CD8-positive, alpha-beta T cell (primary cell): ENCODE measurements at regions of chr14 and their contacts with region 1.

Region 1: GRCh38 chr14:51651388-51652167 is at the start of gene FRMD6:
- DNase-seq: peak; percentile 58 to 90 (median 76)
- ATAC-seq: peak; percentile 82
- H3K4me3 ChIP-seq: peak within 1 kb of the TSS; percentile 87 to 94
- H3K4me3 Mint-ChIP-seq: peak within 1 kb of the TSS; percentile 85
- H3K27ac ChIP-seq: peak within 1 kb of the TSS; percentile 55 to 73
- H3K27ac Mint-ChIP-seq: peak within 1 kb of the TSS; percentile 73
- H3K4me1 ChIP-seq: peaks cover 19% of the 10 kb centered on the region
- H3K4me1 Mint-ChIP-seq: peaks cover 17% of the 10 kb centered on the region
- H3K27me3 ChIP-seq: peaks cover 6 to 16% of the 10 kb centered on the region in 2 experiments
- H3K27me3 Mint-ChIP-seq: peaks cover 21% of the 10 kb centered on the region
- CTCF ChIP-seq: peak; percentile 70
- total RNA-seq, gene FRMD6: 2.4 to 3.5 TPM

Region 2: DNA sequence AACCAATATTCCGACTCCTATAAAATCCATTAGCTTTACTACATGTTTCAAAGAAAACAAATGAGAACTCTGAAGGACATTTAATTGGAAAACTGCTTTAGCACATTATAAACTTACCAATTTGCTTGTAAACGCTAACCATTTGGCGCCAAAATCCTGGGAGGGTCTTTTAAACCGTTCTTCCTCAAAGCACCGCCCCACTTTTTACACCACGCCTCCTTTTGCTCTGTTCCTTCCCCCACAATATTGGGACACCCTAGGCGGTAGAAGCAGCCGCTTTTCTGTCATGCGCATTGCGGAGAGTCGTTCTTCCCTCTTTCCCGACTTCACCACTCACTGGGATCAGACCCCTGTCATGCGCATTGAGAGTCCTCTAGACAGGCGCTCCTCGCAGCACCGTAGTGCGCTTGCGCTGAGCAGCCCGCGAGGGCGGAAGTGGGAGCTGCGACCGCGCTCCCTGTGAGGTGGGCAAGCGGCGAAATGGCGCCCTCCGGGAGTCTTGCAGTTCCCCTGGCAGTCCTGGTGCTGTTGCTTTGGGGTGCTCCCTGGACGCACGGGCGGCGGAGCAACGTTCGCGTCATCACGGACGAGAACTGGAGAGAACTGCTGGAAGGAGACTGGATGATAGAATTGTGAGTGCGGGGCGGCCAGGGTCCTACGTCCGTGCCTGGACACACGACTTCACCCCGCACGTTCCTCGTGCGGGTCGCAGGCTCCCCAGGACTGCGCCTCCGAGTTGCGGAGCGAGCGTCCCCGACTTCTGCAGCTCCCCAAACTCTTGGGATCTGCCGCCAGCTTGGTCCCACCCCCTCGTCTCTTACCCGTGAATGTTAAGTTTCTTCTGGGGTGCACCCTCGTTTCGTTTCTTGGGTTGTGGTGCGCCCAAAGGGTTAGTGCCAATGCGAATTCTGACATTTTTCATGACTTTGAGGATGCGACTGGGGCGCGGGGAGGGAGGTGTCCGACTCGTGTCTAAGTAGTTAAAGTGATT is 411.5 kb before region 1 on chr14 and contains the start of gene TMX1:
- CTCF ChIA-PET with region 1: no interaction called
- POLR2A ChIA-PET with region 1: no interaction called
- intact Hi-C with region 1: loop called (anchors 2 to 5 kb)
- DNase-seq: peak; percentile 58 to 94 (median 85)
- ATAC-seq: peak; percentile 93
- H3K4me3 ChIP-seq: peak within 1 kb of the TSS; percentile 76 to 95
- H3K4me3 Mint-ChIP-seq: no peak within 1 kb of the TSS
- H3K27ac ChIP-seq: peak within 1 kb of the TSS; percentile 57 to 77
- H3K27ac Mint-ChIP-seq: no peak within 1 kb of the TSS
- H3K4me1 ChIP-seq: peaks cover 30% of the 10 kb centered on the region
- H3K4me1 Mint-ChIP-seq: peaks cover 24% of the 10 kb centered on the region
- H3K27me3 ChIP-seq: no peaks in the 10 kb centered on the region
- H3K27me3 Mint-ChIP-seq: no peaks in the 10 kb centered on the region
- CTCF ChIP-seq: no peak
- total RNA-seq, gene TMX1: 10.2 to 11.1 TPM

Region 3: DNA sequence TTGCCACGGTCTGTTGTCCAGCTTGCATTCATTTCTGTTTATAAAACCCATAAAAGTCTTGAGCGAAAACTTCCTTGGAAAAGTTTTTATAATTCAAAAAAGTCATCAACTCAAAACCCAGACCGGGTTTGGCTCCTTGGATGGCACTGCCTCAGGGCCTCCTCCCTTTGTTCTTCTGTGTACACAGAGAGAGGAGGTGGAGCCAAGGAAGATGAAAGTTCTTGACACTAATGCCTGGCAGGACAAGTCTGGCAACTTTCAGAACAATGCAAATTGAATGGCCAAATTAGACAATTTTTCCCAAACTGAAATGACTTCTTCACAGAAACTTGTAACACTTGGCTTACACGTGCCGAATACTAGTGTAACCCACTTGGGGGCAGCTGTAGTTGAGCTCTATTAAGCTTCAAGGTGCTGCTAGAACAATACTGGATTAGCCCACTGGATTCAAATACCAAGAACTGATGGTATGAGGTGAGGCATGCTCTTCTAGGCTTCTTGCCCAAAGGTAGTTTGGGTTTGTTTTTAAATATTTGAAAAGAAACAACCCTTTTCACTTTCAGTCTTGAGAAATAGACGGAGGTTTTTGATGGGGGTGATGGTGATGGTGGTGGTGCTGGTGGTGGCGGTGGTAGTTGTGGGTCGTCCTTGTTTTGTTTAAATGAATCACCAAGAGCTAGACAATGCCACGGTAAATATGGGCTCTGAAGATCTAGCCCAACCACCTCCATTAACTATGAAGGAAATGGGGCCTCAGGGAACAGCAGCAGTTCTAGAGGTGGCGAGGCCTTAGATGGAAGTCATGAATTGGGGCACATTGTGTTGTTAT is 86.4 kb before region 1 on chr14:
- CTCF ChIA-PET with region 1: interaction called, 3 read pairs
- POLR2A ChIA-PET with region 1: no interaction called
- intact Hi-C with region 1: loop called in 1 of 2 experiments (anchors 2 kb)
- DNase-seq: no peak
- ATAC-seq: no peak
- H3K4me3 ChIP-seq: no peak overlapping the region
- H3K4me3 Mint-ChIP-seq: no peak overlapping the region
- H3K27ac ChIP-seq: no peak overlapping the region
- H3K27ac Mint-ChIP-seq: no peak overlapping the region
- H3K4me1 ChIP-seq: peaks cover 28% of the 10 kb centered on the region
- H3K4me1 Mint-ChIP-seq: peaks cover 36% of the 10 kb centered on the region
- H3K27me3 ChIP-seq: no peaks in the 10 kb centered on the region
- H3K27me3 Mint-ChIP-seq: no peaks in the 10 kb centered on the region
- CTCF ChIP-seq: no peak

Region 4: DNA sequence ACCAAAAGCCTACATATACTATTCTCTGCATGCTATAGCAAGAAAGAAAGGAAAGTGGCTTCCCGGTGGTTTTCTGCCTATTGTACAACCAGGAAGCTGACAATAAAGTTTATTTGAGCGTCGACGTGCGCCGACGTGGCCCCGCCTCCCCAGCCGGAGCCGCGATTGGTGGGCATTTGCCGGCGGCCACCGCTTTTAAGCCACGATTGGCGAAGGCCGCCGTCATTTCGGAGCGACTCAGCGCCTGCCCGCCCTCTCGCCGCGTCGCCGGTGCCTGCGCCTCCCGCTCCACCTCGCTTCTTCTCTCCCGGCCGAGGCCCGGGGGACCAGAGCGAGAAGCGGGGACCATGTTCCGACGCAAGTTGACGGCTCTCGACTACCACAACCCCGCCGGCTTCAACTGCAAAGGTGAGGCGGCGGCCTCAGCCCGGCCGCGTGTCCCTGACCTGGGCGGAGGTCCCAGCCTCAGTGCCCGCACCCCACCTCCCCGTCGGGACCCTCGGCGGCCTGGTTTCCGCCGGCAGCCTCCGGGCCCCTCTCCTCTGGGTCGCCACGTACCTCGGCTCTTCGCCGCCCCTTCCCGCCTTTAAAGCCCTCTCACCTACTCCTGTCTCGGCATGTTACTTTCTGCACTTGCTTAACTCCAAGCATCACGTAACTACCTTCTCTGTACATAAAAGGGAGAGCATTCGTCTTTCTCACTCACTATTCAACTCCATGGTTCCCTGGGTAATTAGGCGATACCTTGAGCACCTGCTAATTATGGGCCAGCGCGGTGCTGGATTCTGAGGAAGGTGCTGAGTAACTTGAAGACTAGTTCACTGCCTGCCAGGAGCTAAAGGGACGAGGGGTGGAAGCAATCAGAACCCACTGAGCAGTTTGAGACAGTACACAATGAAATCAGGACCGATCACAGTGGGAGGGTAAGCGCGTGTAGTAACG is 338.0 kb after region 1 on chr14 and contains the start of gene RTRAF:
- CTCF ChIA-PET with region 1: no interaction called
- POLR2A ChIA-PET with region 1: no interaction called
- intact Hi-C with region 1: loop called (anchors 1 to 2 kb)
- DNase-seq: peak; percentile 77 to 97 (median 91)
- ATAC-seq: peak; percentile 96
- H3K4me3 ChIP-seq: peak within 1 kb of the TSS; percentile 65 to 84
- H3K4me3 Mint-ChIP-seq: peak within 1 kb of the TSS; percentile 94
- H3K27ac ChIP-seq: peak within 1 kb of the TSS; percentile 84 to 85
- H3K27ac Mint-ChIP-seq: peak within 1 kb of the TSS; percentile 94
- H3K4me1 ChIP-seq: peaks cover 15% of the 10 kb centered on the region
- H3K4me1 Mint-ChIP-seq: peaks cover 46% of the 10 kb centered on the region
- H3K27me3 ChIP-seq: no peaks in the 10 kb centered on the region
- H3K27me3 Mint-ChIP-seq: no peaks in the 10 kb centered on the region
- CTCF ChIP-seq: no peak
- total RNA-seq, gene RTRAF: 155 to 161 TPM

Region 5: GRCh38 chr14:52791203-52792096 is 1139.9 kb after region 1 on chr14 and contains the start of gene GNPNAT1:
- CTCF ChIA-PET with region 1: no interaction called
- POLR2A ChIA-PET with region 1: no interaction called
- intact Hi-C with region 1: loop called (anchors 5 to 10 kb)
- DNase-seq: peak; percentile 80 to 97 (median 88)
- ATAC-seq: peak; percentile 96
- H3K4me3 ChIP-seq: peak within 1 kb of the TSS; percentile 78 to 85
- H3K4me3 Mint-ChIP-seq: peak within 1 kb of the TSS; percentile 93
- H3K27ac ChIP-seq: peak within 1 kb of the TSS; percentile 65 to 74
- H3K27ac Mint-ChIP-seq: peak within 1 kb of the TSS; percentile 89
- H3K4me1 ChIP-seq: peaks cover 20% of the 10 kb centered on the region
- H3K4me1 Mint-ChIP-seq: peaks cover 40% of the 10 kb centered on the region
- H3K27me3 ChIP-seq: no peaks in the 10 kb centered on the region
- H3K27me3 Mint-ChIP-seq: no peaks in the 10 kb centered on the region
- CTCF ChIP-seq: no peak
- total RNA-seq, gene GNPNAT1: 5.6 to 7.5 TPM